Heart left ventricle (tissue), 16 donors: ENCODE measurements at regions of chr10 and their contacts with region 1.

Region 1: DNA sequence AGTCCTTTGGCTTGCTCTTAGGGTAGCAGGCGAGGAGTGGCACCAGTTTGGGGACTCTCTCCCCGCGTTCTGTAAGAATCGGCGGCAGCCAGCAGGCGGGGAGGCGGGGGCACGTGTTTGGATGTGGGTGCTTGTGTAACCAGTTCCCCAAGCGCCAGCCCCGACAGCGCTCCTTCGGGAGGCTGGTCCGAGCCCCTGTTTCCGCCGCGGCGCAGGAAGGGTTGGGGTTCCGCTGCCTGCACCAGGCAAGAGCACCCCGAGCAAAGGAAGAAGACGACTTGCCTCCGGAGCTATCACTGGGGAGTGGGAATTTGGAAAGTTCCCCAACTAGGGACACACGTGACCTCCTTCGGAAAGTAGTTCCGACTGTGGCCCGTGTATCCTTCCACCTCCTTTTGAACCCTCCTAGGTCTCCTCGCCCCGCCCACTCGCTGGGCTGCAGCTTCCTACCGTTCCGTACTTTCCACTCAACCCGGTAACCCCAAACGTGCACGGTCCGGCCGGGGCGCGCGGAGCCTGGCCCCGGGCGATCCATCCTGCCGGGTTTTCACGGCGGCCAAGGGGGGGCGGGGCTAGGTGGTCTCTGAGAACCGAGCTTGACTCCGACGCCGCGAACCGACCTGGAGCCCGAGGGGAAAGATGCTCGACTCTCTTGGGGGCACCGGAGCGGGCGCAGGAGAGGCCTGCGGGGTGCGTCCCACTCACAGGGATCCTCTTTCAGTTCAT is 1.2 kb downstream of the KLLN start:
- DNase-seq: peak; percentile 97 to 98 (median 98)
- ATAC-seq: peak; percentile 88 to 92 (median 91)
- H3K4me3 ChIP-seq: peak overlapping the region; percentile 63 to 95 (median 80)
- H3K27ac ChIP-seq: peak overlapping the region; percentile 95 to 99 (median 97)
- H3K4me1 ChIP-seq: peaks cover 0 to 24% (median 14%) of the 10 kb centered on the region in 12 donors
- H3K27me3 ChIP-seq: no peaks in the 10 kb centered on the region
- CTCF ChIP-seq: no peak
- POLR2A ChIP-seq: peak in 1 of 2 donors; percentile 58

Region 2: GRCh38 chr10:87794285-87794684 is 67.8 kb before region 1 on chr10:
- intact Hi-C with region 1: no loop called
- DNase-seq: no peak
- ATAC-seq: no peak
- H3K4me3 ChIP-seq: no peak overlapping the region
- H3K27ac ChIP-seq: no peak overlapping the region
- H3K4me1 ChIP-seq: peaks cover 0 to 56% (median 8%) of the 10 kb centered on the region in 12 donors
- H3K27me3 ChIP-seq: no peaks in the 10 kb centered on the region
- CTCF ChIP-seq: no peak
- POLR2A ChIP-seq: no peak

Region 3: GRCh38 chr10:87925570-87925969 is 63.5 kb after region 1 on chr10:
- intact Hi-C with region 1: loop called in 3 of 10 experiments (anchors 5 to 10 kb)
- DNase-seq: no peak
- ATAC-seq: peak in 2 of 4 donors; percentile 26 to 47
- H3K4me3 ChIP-seq: no peak overlapping the region
- H3K27ac ChIP-seq: no peak overlapping the region
- H3K4me1 ChIP-seq: peaks cover 0 to 92% (median 53%) of the 10 kb centered on the region in 12 donors
- H3K27me3 ChIP-seq: no peaks in the 10 kb centered on the region
- CTCF ChIP-seq: no peak
- POLR2A ChIP-seq: no peak

Region 4: GRCh38 chr10:88042160-88043100 is 180.3 kb after region 1 on chr10:
- intact Hi-C with region 1: loop called in 2 of 10 experiments (anchors 5 to 10 kb)
- DNase-seq: no peak
- ATAC-seq: peak in 2 of 4 donors; percentile 36 to 79
- H3K4me3 ChIP-seq: peak overlapping the region in 1 of 12 donors; percentile 20
- H3K27ac ChIP-seq: peak overlapping the region in 11 of 12 donors; percentile 0 to 69 (median 43)
- H3K4me1 ChIP-seq: peaks cover 0 to 62% (median 18%) of the 10 kb centered on the region in 12 donors
- H3K27me3 ChIP-seq: no peaks in the 10 kb centered on the region
- CTCF ChIP-seq: no peak
- POLR2A ChIP-seq: no peak

Region 5: DNA sequence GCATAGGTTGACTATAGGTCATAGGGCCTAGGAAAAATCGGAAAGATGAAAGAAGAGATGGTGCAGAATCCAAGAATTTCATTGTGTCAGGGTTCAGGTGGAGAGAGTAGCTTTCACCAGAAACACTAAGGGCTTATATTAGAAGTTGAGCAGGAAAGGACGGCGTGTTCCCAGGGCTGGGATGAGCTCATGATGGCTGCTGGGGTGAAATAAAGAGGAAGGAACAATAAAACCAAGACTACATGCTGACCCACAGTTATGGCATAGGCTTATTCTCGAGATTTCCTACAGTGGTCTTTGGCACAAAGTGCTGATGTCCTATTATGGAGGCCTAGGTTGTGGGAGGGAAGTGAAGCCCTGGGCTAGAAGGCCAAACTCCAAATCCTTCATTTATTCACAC is 197.1 kb after region 1 on chr10:
- intact Hi-C with region 1: no loop called
- DNase-seq: no peak
- ATAC-seq: peak in 2 of 4 donors; percentile 41 to 45
- H3K4me3 ChIP-seq: no peak overlapping the region
- H3K27ac ChIP-seq: peak overlapping the region in 1 of 12 donors; percentile 3
- H3K4me1 ChIP-seq: peaks cover 6 to 46% (median 19%) of the 10 kb centered on the region in 12 donors
- H3K27me3 ChIP-seq: no peaks in the 10 kb centered on the region
- CTCF ChIP-seq: no peak
- POLR2A ChIP-seq: no peak

Region 6: GRCh38 chr10:88232029-88232895 is 370.1 kb after region 1 on chr10:
- intact Hi-C with region 1: loop called in 1 of 10 experiments (anchors 5 kb)
- DNase-seq: peak; percentile 83 to 93 (median 85)
- ATAC-seq: peak; percentile 11 to 63 (median 46)
- H3K4me3 ChIP-seq: no peak overlapping the region
- H3K27ac ChIP-seq: peak overlapping the region; percentile 24 to 75 (median 63)
- H3K4me1 ChIP-seq: peaks cover 0 to 65% (median 47%) of the 10 kb centered on the region in 12 donors
- H3K27me3 ChIP-seq: no peaks in the 10 kb centered on the region
- CTCF ChIP-seq: no peak
- POLR2A ChIP-seq: no peak

Region 7: DNA sequence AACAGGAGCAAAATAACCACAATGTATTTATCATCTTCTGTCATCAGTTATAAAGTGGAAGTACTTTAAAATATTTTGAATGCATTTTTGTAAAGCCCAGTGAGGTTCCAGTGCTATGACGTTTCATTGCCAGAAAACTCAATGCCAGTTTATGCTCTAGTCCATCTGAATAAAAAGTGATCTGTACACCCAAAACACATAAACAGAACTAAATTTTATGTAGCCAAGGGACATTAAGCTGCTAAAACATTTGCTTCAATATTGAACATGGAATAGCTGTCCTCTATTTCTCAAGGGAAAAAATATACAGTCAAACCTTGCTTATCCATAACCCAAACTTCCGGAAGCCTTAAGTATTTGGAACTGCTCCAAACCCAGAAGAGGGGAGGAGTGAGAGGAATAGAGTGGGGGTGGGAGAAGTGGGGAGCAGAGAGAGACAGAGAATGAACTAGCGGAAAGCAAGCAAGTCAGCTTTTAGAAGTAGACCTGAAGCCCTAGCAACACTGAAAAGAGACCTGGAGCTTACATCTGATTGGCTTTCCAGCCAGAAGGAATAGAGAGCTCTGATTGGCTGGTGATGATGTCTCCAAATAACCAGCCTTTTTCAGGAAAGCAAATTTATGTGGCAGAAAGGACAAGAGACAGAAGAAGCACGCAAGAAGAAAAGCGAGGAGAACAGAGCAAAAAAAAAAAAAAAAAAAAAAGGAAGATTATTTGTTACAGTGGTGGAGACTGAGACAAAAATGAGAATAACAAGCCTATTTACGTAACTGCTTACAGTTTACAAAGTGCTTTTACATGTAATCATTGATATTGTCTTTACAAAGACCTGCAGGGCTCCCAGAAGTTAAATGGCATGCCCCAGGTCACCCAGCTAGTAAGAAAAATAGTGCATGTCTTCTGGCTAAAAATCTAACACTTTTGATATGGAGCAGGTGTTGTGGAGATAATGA is 525.0 kb after region 1 on chr10:
- intact Hi-C with region 1: loop called in 8 of 10 experiments (anchors 2 to 5 kb)
- DNase-seq: peak in 2 of 5 donors; percentile 24 to 51
- ATAC-seq: peak; percentile 72 to 95 (median 92)
- H3K4me3 ChIP-seq: peak overlapping the region in 9 of 12 donors; percentile 5 to 48 (median 32)
- H3K27ac ChIP-seq: peak overlapping the region in 11 of 12 donors; percentile 43 to 73 (median 55)
- H3K4me1 ChIP-seq: peaks cover 0 to 52% (median 19%) of the 10 kb centered on the region in 12 donors
- H3K27me3 ChIP-seq: no peaks in the 10 kb centered on the region
- CTCF ChIP-seq: no peak
- POLR2A ChIP-seq: peak in 1 of 2 donors; percentile 35